A549 (cell line): ENCODE measurements at regions of chr1 and their contacts with region 1.

Region 1: DNA sequence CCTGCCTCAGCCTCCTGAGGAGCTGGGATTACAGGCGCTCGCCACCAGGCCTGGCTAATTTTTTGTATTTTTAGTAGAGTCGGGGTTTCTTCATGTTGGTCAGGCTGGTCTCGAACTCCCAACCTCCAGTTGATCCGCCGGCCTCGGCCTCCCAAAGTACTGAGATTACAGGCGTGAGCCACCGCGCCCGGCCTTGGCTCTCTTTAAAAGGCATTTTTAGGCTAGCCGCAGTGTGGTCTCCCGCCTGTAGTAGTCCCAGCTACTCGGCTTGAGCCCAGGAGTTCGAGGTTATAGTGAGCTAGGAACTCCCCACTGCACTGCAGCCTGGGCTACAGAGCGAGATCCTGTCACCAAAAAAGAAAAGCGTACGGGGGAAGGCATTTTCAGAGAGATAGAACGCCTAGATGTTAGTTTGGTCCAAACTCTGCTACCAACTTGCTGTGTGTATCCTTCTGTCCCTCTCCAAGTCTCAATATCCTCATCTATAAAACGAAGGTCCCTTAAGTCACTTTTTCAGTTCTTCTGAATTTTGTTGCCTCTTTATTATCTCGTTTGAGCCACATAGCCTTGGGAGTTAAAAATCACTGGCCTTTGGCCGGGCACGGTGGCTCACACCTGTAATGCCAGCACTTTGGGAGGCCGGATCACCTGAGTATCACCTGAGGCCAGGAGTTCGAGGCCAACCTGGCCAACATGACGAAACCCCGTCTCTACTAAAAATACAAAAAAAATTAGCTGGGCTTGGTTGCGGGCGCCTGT is 734 bp downstream of the MED18 start:
- DNase-seq: peak in 1 of 2 experiments; percentile 30
- ATAC-seq: peak; percentile 55 to 73; a peak in 3 of 6 replicates
- H3K4me3 ChIP-seq: peak overlapping the region; percentile 81
- H3K27ac ChIP-seq: peak overlapping the region; percentile 94 to 95
- H3K4me1 ChIP-seq: peaks cover 18% of the 10 kb centered on the region; the same call in 2 of the 3 replicates
- CTCF ChIP-seq: no peak
- EP300 ChIP-seq: no peak
- POLR2A ChIP-seq: no peak
- RAD21 ChIP-seq: no peak

Region 2: DNA sequence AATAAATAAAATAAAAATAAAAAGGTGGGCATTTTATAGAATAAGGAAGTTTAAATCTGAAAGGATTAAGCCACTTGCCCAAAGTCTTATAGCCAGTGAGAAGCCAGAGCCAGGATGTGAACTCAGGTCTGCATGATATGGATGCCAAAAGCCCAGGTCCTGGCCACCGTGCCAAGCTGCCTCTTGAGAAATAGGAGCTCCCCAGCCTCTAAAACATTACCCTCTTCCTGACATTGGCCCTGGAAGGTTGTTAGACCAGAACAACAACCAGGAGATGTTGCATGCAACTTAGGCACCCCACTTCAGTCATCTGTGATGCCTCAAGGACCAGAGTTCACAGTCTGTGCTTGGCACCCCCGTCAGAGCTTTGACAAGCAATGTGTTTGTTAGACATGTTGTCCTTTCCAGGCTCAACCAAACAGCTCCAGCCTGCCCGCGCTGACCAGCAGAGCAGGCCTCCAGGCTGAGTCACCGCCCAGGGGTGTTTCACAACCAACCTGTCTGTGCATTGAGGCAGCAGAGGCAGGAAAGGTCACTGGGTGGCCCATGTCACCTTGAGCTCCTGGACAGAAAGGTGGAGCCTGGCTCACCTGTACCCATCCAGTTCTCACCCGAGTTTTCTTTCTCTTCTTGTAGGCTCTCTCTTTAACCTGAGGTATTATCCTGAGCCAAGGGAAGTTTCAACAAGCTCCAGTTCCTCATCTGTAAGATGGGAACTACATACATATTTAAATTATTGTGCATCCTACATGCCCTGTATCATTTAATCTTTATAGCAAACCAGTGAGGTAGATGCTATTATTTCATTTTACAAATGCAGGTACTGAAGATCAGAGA is 15.6 kb before region 1 on chr1:
- CTCF ChIA-PET with region 1: no interaction called
- POLR2A ChIA-PET with region 1: interaction called, 15 read pairs
- DNase-seq: peak; percentile 47 to 62
- ATAC-seq: peak; percentile 98 to 99
- H3K4me3 ChIP-seq: no peak overlapping the region
- H3K27ac ChIP-seq: peak overlapping the region; percentile 67 to 79; a peak in 5 of 6 replicates
- H3K4me1 ChIP-seq: peaks cover 15% of the 10 kb centered on the region
- CTCF ChIP-seq: no peak
- EP300 ChIP-seq: no peak
- POLR2A ChIP-seq: no peak
- RAD21 ChIP-seq: no peak

Region 3: DNA sequence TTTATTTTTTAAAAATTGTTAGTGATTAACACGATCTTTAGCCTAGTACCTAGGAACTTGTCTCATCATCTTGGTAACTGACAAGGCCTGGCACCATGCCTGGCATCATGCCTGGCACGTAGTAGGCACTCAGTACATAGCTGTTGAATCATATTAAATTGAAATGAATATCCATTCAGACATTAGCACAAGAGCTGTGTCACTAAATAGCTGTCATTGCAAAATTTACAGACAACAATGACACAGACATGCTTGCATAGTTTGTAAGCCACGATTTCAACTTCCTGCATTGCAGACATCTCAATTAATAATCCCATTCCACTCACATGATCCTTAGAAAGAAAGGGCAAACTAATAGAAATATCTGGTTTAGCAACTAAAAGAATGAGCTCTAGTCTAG is 24.5 kb after region 1 on chr1:
- CTCF ChIA-PET with region 1: interaction called, 10 read pairs
- POLR2A ChIA-PET with region 1: interaction called, 14 read pairs
- DNase-seq: peak in 1 of 2 experiments; percentile 37
- ATAC-seq: peak; percentile 27 to 63; a peak in 3 of 6 replicates
- H3K4me3 ChIP-seq: no peak overlapping the region
- H3K27ac ChIP-seq: peak overlapping the region; percentile 70 to 89
- H3K4me1 ChIP-seq: peaks cover 27% of the 10 kb centered on the region
- CTCF ChIP-seq: no peak
- EP300 ChIP-seq: no peak
- POLR2A ChIP-seq: no peak
- RAD21 ChIP-seq: no peak

Region 4: DNA sequence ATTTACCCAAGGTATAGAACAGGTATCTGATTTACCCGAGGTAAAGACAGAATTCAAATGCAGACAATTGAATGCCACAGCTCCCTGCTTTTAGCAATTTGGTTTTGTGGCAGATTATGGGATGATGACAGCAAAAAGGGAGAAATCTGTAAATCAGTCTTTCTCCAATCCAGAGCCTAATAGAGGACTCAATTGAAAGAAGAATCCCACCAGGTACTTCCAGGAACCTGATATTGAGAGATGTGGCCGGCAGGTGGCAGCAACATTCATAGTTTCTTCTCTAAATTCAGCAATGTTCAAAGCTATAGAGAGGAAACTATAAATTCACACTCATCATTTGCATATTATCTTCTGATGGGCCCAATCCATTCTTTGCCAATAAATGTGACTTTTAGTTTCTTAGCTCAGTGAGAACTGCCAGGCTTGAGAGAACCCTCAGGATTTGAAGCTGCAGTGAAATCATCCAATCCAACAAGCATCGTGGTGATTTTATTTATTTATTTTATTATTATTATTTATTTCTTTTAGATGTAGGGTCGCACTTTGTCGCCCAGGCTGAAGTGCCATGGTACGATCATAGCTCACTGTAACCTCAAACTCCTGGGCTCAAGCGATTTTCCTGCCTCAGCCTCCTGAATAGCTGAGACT is 30.1 kb after region 1 on chr1:
- CTCF ChIA-PET with region 1: interaction called, 10 read pairs
- POLR2A ChIA-PET with region 1: interaction called, 3 read pairs
- DNase-seq: peak; percentile 48 to 64
- ATAC-seq: peak; percentile 80 to 81; a peak in 5 of 6 replicates
- H3K4me3 ChIP-seq: no peak overlapping the region
- H3K27ac ChIP-seq: no peak overlapping the region
- H3K4me1 ChIP-seq: no peaks in the 10 kb centered on the region; the same call in 2 of the 3 replicates
- CTCF ChIP-seq: peak; percentile 65
- EP300 ChIP-seq: no peak
- POLR2A ChIP-seq: no peak
- RAD21 ChIP-seq: peak; percentile 61 to 65

Region 5: DNA sequence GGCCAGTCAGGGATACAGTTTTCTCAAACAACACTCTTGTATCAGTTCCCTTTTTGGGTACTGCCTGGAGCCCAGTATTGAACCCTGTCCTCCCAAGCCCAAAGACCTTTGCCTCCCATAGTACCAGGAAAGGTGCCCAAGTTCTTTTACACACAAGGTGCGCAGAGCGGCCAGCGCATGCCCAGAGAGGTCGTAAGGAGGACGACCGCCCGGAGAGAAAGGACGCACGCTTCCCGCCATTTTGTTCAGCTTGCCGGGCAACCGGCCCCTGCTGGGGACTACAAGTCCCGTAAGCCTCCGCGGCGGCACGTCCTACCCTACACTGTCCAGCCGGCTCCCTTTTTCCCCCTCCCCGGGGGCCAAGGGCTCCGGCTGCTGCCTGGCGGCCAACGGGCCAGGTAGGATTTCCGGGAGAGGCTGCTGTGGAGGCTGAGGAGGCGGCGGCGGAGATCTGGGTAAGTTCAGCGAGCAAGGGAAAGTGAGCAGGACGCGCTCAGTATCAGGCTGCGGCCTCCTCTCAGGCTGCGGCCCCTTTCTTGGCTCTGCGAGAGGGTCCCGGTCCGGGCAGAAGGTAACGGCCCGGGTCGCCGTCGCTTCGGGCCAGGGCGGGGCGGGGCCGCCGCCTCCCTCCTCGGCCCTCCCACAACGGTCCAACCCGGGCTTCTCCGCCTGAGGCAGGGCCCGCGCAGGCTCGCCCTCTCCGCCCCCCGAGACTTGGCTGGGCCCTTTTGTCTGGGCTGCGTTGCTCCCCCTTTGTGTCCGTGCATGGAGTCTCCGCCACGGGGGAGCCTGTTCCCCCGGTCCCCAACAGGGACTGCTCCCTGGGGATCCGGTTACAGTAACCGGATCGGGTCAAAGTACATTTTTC is 40.0 kb after region 1 on chr1 and contains the start of gene PHACTR4:
- CTCF ChIA-PET with region 1: no interaction called
- POLR2A ChIA-PET with region 1: interaction called, 15 read pairs
- DNase-seq: peak; percentile 87 to 95
- ATAC-seq: peak; percentile 94 to 98
- H3K4me3 ChIP-seq: peak within 1 kb of the TSS; percentile 72
- H3K27ac ChIP-seq: peak within 1 kb of the TSS; percentile 96
- H3K4me1 ChIP-seq: peaks cover 39% of the 10 kb centered on the region
- CTCF ChIP-seq: no peak
- EP300 ChIP-seq: no peak
- POLR2A ChIP-seq: peak; percentile 74
- RAD21 ChIP-seq: no peak
- polyA plus RNA-seq, gene PHACTR4: 17.4 and 32.1 TPM in 2 replicates

Region 6: DNA sequence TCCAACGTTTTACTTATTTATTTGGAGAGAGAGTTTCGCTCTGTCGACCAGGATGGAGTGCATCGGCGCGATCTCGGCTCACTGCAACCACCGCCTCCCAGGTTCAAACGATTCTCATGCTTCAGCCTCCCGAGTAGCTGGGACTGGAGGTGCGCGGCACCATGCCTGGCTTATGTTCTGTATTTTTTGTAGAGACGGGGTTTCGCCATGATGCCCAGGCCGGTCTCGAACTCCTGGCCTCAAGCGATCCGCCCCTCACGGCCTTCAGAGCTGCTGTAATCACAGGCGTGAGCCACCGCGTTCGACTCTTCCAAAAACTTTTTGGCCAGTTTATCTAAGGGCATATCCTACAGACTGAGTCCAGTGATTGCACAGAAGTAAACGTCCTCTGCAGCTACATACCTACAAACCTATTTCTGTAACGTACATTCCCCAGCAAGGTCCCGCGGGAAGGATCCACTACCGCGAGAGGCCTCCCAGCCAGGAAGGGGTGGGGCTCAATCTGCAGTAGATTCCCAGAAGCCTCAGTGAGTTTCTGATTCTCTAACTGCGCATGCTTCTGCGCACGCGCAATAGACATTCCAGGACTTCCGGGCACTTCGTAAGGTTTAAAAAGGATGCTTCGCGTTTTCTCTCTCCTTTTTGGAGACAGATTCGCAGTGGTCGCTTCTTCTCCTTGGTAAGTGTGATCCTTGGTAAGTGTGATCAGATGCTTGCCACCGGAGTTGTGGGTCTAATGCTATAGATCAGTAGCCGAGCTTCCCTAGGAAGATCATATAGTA is 176.0 kb after region 1 on chr1 and contains the start of gene RCC1:
- CTCF ChIA-PET with region 1: no interaction called
- POLR2A ChIA-PET with region 1: interaction called, 14 read pairs
- DNase-seq: peak; percentile 97
- ATAC-seq: peak; percentile 85 to 87
- H3K4me3 ChIP-seq: peak within 1 kb of the TSS; percentile 99
- H3K27ac ChIP-seq: peak within 1 kb of the TSS; percentile 94 to 99
- H3K4me1 ChIP-seq: peaks cover 30% of the 10 kb centered on the region
- CTCF ChIP-seq: no peak
- EP300 ChIP-seq: no peak
- POLR2A ChIP-seq: peak; percentile 83
- RAD21 ChIP-seq: no peak
- polyA plus RNA-seq, gene RCC1: 42.1 and 52.1 TPM in 2 replicates